ENCODE measurements at regions of chr17 and their contacts with region 1.

Region 1: GRCh38 chr17:4599505-4600306 is 15.4 kb downstream of the SMTNL2 start:
- DNase-seq: peak in 1 of 2 experiments; percentile 73
- H3K4me3 ChIP-seq: no peak overlapping the region
- H3K27ac ChIP-seq: no peak overlapping the region
- H3K4me1 ChIP-seq: peaks cover 16% of the 10 kb centered on the region
- H3K27me3 ChIP-seq: peaks cover 31% of the 10 kb centered on the region
- CTCF ChIP-seq: no peak

Region 2: DNA sequence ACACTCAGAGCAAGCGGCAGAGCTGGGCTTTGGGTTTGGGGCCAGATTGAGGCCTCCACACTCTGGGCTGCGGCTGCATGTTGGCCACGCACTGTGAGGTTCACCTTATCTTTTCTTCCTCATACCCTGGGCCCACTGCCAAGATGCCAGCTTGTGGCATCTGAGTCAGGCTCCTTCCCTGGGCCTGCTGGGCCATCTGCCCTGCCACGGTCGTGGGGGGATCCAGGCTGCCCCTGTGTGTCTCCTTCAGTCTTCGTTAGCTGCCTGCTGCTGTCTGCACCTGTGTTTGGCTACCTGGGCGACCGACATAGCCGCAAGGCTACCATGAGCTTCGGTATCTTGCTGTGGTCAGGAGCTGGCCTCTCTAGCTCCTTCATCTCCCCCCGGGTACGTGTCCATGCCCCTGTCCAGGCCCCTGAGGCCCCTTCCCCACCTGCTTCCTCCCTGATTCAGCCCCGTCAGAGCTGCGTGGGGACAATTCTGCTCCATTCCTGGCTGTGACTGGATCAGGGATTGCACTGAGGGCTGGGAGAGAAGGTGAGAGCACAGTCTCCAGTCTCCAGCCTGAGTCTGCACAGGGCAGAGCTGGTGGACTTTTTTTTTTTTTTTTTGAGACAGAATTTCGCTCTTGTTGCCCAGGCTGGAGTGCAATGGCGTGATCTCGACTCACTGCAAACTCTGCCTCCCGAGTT is 154.8 kb before region 1 on chr17:
- CTCF ChIA-PET with region 1: no interaction called
- POLR2A ChIA-PET with region 1: interaction called, 17 read pairs
- intact Hi-C with region 1: no loop called
- DNase-seq: peak; percentile 79 to 90
- H3K4me3 ChIP-seq: no peak overlapping the region
- H3K27ac ChIP-seq: no peak overlapping the region
- H3K4me1 ChIP-seq: peaks cover 27% of the 10 kb centered on the region
- H3K27me3 ChIP-seq: no peaks in the 10 kb centered on the region
- CTCF ChIP-seq: no peak